ENCODE measurements at regions of chr7 and their contacts with region 1.

Region 1: DNA sequence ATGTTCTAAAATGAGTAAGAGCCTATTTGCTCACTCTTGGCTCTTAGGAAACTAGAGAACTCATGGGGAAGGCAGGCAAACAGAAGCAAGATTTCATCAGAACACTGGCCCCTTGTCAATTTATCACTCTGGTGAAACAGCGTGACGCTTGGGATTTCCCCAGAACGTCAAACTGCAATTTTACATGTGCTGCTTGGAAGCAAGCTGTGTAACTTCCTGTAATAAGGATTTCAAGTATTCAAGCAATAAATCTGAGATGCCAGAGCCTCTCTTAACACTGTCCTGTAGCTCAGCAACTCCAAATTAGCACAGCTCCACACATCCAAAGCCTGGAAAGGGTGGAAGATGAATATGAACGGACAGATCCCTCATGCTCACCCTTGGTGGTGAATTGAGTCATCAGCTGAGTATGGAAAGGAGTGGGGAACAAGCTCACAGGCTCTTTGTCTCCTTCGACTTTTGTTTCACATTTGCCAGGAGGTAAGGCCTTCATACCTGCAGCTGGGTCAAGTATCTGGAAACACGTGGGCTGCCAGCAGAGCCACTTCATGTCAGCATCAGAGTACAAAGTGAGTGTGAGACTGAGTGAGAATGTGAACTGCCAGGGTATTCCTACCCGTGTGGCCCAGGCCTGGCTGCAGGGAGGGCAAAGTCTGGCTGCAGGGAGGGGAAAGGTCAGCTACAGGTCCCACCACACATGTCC is 140.4 kb upstream of the NAMPT start:
- DNase-seq: peak; percentile 67
- H3K4me3 Mint-ChIP-seq: peak overlapping the region; percentile 67
- H3K27ac Mint-ChIP-seq: peak overlapping the region; percentile 97
- H3K4me1 Mint-ChIP-seq: peaks cover 91% of the 10 kb centered on the region
- H3K27me3 Mint-ChIP-seq: no peaks in the 10 kb centered on the region

Region 2: GRCh38 chr7:104956753-104957450 is 1468.3 kb before region 1 on chr7:
- intact Hi-C with region 1: loop called (anchors 5 kb)
- DNase-seq: peak; percentile 62
- H3K4me3 Mint-ChIP-seq: peak overlapping the region; percentile 69
- H3K27ac Mint-ChIP-seq: peak overlapping the region; percentile 100
- H3K4me1 Mint-ChIP-seq: peaks cover 67% of the 10 kb centered on the region
- H3K27me3 Mint-ChIP-seq: no peaks in the 10 kb centered on the region

Region 3: DNA sequence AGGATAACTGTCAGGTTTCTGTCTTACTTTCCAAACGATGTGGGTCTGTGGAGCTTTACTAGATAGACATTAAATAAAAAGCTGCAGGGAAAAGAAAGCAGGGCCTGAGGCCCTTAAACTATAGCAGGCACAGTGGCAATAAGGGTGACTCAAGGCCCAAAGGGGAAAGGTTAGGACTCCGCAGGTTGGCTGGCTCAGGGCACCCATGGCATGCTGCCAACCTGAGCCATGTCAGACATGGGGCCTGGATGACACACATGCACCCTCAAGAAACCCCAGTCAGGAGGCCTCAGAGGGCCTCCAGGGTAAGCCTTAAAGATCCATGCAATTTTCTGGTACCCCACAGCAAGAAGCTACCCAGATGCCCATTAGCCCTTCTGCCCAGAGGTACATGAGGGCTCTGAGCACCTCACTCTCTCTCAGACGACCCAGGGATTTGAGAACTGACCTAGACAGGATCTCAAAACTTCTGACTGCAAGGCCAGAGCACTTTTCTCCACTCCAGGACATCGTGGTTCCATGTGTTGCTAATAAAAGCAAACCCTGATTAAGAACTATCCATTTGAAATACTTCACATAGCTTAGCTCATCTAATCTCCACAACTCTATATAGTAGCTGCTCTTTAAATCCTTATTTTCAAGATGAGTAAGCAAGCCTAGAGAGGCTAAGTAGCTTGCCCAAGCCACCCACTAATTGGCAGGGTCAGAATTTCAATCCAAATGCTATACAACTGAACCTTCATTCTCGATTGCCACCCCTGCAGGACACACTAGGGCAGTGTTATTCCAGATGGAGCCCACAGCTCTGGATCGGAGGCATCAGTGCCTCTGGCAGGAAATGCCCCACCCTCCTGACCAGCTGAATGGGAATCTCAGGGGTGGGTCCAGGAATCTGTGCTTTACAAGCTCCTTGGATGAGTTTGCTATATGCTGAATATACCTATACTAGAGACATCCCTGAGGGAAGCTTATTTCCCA is 711.4 kb before region 1 on chr7:
- intact Hi-C with region 1: no loop called
- DNase-seq: no peak
- H3K4me3 Mint-ChIP-seq: no peak overlapping the region
- H3K27ac Mint-ChIP-seq: no peak overlapping the region
- H3K4me1 Mint-ChIP-seq: no peaks in the 10 kb centered on the region
- H3K27me3 Mint-ChIP-seq: no peaks in the 10 kb centered on the region

Region 4: GRCh38 chr7:106255246-106255645 is 169.9 kb before region 1 on chr7:
- intact Hi-C with region 1: loop called (anchors 1 kb)
- DNase-seq: no peak
- H3K4me3 Mint-ChIP-seq: no peak overlapping the region
- H3K27ac Mint-ChIP-seq: peak overlapping the region; percentile 44
- H3K4me1 Mint-ChIP-seq: peaks cover 46% of the 10 kb centered on the region
- H3K27me3 Mint-ChIP-seq: no peaks in the 10 kb centered on the region

Region 5: DNA sequence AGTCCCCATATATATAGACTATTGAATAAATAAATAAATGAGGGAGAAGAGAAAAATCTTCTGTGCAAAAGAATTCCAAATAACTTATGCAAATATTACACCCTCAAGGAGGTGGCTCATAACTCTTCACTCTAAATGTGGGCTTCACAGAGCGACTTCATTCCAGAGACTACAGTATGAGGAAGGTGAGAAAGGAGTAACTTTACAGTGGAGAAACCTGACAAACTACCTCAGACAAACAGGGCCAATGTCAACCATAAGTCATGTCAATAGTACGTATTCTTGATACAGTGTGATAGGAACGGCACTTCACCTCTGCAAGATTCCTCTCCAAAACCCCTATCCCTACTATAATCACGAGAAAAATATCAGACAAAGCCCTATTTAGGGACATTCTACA is 18.0 kb after region 1 on chr7:
- intact Hi-C with region 1: no loop called
- DNase-seq: no peak
- H3K4me3 Mint-ChIP-seq: no peak overlapping the region
- H3K27ac Mint-ChIP-seq: no peak overlapping the region
- H3K4me1 Mint-ChIP-seq: peaks cover 7% of the 10 kb centered on the region
- H3K27me3 Mint-ChIP-seq: peaks cover 2% of the 10 kb centered on the region

Region 6: DNA sequence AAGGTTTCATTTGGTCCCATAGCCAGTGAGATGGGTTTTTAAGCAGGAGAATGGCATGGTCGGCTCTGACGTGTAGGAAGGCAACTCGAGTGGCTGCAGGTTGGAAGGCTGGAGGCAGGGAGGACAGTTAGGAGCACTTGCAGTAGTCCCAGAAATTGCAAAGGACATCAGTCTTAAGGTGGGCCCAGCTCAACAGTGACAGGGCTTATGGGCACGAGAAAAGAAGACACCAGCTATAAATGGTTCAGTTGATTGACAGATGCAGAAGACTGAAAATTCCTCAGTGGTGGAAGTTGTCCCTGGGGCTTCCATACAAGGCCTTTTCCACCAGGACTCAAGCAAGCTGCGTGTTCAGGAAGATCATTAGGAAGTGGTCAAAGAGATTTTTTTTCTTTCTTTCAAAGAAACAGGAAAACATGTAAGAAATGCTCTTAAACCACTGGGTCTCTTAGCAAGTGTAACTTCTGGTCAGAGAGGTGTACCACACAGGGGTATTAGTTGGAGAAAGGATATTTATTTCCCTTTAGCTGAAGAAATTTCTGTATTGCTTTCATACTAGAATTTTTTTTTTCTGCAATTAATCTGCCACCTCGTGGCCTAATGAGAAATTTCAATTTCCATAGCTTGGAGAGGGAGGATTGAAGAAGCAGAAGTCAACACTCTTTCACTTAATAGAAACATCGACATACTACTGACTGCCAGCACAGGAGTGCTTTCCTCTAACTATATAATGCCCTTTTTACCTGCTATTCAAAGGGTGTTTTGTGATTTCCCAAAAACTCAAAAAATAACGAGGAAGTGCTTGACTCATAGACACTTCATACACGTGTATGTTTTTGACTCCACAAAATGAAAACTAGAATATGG is 37.1 kb after region 1 on chr7:
- intact Hi-C with region 1: loop called (anchors 1 kb)
- DNase-seq: no peak
- H3K4me3 Mint-ChIP-seq: no peak overlapping the region
- H3K27ac Mint-ChIP-seq: no peak overlapping the region
- H3K4me1 Mint-ChIP-seq: peaks cover 30% of the 10 kb centered on the region
- H3K27me3 Mint-ChIP-seq: no peaks in the 10 kb centered on the region